ENCODE measurements at regions of chr2 and their contacts with region 1.

Region 1: DNA sequence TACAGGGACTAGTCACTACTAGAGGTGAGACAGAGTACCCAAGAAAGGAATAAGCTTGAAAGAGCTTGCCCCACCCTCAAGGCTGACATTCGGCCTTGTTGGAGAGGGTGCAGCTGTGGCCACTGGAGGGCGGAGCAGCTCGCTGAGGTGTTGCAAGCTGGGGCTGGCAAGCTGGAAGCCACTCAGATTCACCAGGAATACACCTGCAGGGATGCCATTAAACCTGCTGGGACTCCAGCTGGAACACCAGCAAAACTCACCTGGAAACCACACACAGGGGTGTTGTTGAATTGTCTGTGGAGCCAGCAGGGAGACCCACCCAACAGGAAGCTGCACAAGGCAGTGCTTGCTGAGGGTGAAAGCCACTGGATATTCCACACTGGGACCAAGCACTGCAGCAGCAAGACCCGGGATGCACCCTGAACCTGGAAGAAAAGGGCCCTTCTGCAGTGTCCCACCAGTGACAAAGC is 26.1 kb downstream of the KCTD18 start:
- DNase-seq: no peak
- H3K4me3 ChIP-seq: no peak overlapping the region
- H3K4me3 Mint-ChIP-seq: no peak overlapping the region
- H3K27ac ChIP-seq: no peak overlapping the region
- H3K27ac Mint-ChIP-seq: no peak overlapping the region
- H3K4me1 ChIP-seq: no peaks in the 10 kb centered on the region
- H3K4me1 Mint-ChIP-seq: peaks cover 0 to 5% (median 1%) of the 10 kb centered on the region in 4 donors
- H3K27me3 ChIP-seq: no peaks in the 10 kb centered on the region
- H3K27me3 Mint-ChIP-seq: no peaks in the 10 kb centered on the region

Region 2: GRCh38 chr2:199979832-199980628 is 503.7 kb before region 1 on chr2:
- CTCF ChIA-PET with region 1: interaction called, 74 read pairs
- POLR2A ChIA-PET with region 1: no interaction called
- intact Hi-C with region 1: loop called (anchors 1 kb)
- DNase-seq: peak; percentile 64 to 71 (median 69)
- H3K4me3 ChIP-seq: no peak overlapping the region
- H3K4me3 Mint-ChIP-seq: no peak overlapping the region
- H3K27ac ChIP-seq: no peak overlapping the region
- H3K27ac Mint-ChIP-seq: no peak overlapping the region
- H3K4me1 ChIP-seq: no peaks in the 10 kb centered on the region
- H3K4me1 Mint-ChIP-seq: peaks cover 0 to 5% (median under 1%) of the 10 kb centered on the region in 4 donors
- H3K27me3 ChIP-seq: no peaks in the 10 kb centered on the region
- H3K27me3 Mint-ChIP-seq: peaks cover 0 to 2% of the 10 kb centered on the region in 2 donors

Region 3: GRCh38 chr2:199985625-199986207 is 498.0 kb before region 1 on chr2:
- CTCF ChIA-PET with region 1: interaction called, 74 read pairs
- POLR2A ChIA-PET with region 1: no interaction called
- intact Hi-C with region 1: loop called (anchors 1 kb)
- DNase-seq: peak; percentile 42 to 58 (median 50)
- H3K4me3 ChIP-seq: no peak overlapping the region
- H3K4me3 Mint-ChIP-seq: no peak overlapping the region
- H3K27ac ChIP-seq: no peak overlapping the region
- H3K27ac Mint-ChIP-seq: no peak overlapping the region
- H3K4me1 ChIP-seq: no peaks in the 10 kb centered on the region
- H3K4me1 Mint-ChIP-seq: peaks cover 0 to 9% (median 5%) of the 10 kb centered on the region in 4 donors
- H3K27me3 ChIP-seq: no peaks in the 10 kb centered on the region
- H3K27me3 Mint-ChIP-seq: no peaks in the 10 kb centered on the region

Region 4: GRCh38 chr2:200092235-200092634 is 391.5 kb before region 1 on chr2:
- CTCF ChIA-PET with region 1: interaction called, 3 read pairs
- POLR2A ChIA-PET with region 1: no interaction called
- intact Hi-C with region 1: loop called (anchors 5 kb)
- DNase-seq: no peak
- H3K4me3 ChIP-seq: no peak overlapping the region
- H3K4me3 Mint-ChIP-seq: no peak overlapping the region
- H3K27ac ChIP-seq: no peak overlapping the region
- H3K27ac Mint-ChIP-seq: no peak overlapping the region
- H3K4me1 ChIP-seq: no peaks in the 10 kb centered on the region
- H3K4me1 Mint-ChIP-seq: no peaks in the 10 kb centered on the region
- H3K27me3 ChIP-seq: no peaks in the 10 kb centered on the region
- H3K27me3 Mint-ChIP-seq: peaks cover 2 to 3% of the 10 kb centered on the region in 2 donors

Region 5: DNA sequence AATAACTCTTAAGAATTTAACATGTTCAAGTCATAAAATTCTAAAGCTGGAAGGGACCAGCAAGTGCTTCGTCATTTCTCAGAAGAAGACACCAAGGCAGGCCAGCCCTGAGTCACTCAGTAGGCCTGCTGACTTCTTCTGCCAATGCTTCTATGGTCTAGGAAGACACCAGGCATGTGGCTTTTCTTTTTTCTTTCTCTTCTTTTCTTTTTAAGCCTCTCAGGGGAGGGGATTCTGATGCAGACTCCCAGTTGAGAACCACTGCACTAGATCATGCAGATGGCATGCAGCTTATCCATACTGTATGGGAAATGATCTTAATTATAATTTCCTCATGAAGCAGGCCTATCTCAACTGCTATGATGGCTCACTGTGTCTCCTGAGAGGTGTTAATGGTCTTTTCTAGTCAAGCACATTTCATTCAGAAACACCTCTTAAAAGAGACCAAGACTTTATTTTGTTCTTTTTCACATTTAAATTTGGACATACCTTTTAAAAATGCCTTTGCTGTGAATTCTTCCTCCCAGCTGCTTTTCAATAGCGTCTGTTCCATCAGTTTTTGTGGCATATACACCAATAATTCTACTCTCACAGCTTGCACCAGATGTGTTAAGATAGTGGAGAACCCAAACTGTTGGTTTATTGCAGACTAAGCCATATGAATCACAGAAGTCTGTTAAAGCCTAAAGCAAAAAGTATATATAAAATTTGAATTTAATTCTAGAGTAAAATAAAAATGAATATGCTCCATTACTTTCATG is 14.8 kb after region 1 on chr2:
- CTCF ChIA-PET with region 1: interaction called, 23 read pairs
- POLR2A ChIA-PET with region 1: no interaction called
- intact Hi-C with region 1: no loop called
- DNase-seq: no peak
- H3K4me3 ChIP-seq: no peak overlapping the region
- H3K4me3 Mint-ChIP-seq: no peak overlapping the region
- H3K27ac ChIP-seq: no peak overlapping the region
- H3K27ac Mint-ChIP-seq: no peak overlapping the region
- H3K4me1 ChIP-seq: no peaks in the 10 kb centered on the region
- H3K4me1 Mint-ChIP-seq: peaks cover 4 to 9% (median 6%) of the 10 kb centered on the region in 4 donors
- H3K27me3 ChIP-seq: no peaks in the 10 kb centered on the region
- H3K27me3 Mint-ChIP-seq: no peaks in the 10 kb centered on the region

Measured in CD4-positive, alpha-beta memory T cell (primary cell).